ENCODE measurements at regions of chr1 and their contacts with region 1.

Region 1: GRCh38 chr1:109466452-109467300 is at the start of gene SYPL2:
- DNase-seq: peak in 1 of 2 donors; percentile 82
- H3K4me3 ChIP-seq: peak within 1 kb of the TSS; percentile 57 to 91
- H3K27ac ChIP-seq: peak within 1 kb of the TSS; percentile 74 to 92
- H3K4me1 ChIP-seq: no peaks in the 10 kb centered on the region
- H3K27me3 ChIP-seq: no peaks in the 10 kb centered on the region
- CTCF ChIP-seq: peak in 1 of 3 experiments; percentile 9
- total RNA-seq, gene SYPL2: 8.1 TPM

Region 2: GRCh38 chr1:109229531-109230127 is 237.0 kb before region 1 on chr1:
- intact Hi-C with region 1: no loop called
- DNase-seq: no peak
- H3K4me3 ChIP-seq: no peak overlapping the region
- H3K27ac ChIP-seq: no peak overlapping the region
- H3K4me1 ChIP-seq: no peaks in the 10 kb centered on the region
- H3K27me3 ChIP-seq: no peaks in the 10 kb centered on the region
- CTCF ChIP-seq: no peak

Region 3: GRCh38 chr1:109446085-109446695 is 20.5 kb before region 1 on chr1:
- intact Hi-C with region 1: no loop called
- DNase-seq: no peak
- H3K4me3 ChIP-seq: no peak overlapping the region
- H3K27ac ChIP-seq: no peak overlapping the region
- H3K4me1 ChIP-seq: no peaks in the 10 kb centered on the region
- H3K27me3 ChIP-seq: no peaks in the 10 kb centered on the region
- CTCF ChIP-seq: no peak

Region 4: GRCh38 chr1:109483672-109484518 is 17.2 kb after region 1 on chr1 and contains the start of gene ATXN7L2:
- intact Hi-C with region 1: loop called (anchors 1 kb)
- DNase-seq: peak; percentile 72 to 95
- H3K4me3 ChIP-seq: peak within 1 kb of the TSS; percentile 79
- H3K27ac ChIP-seq: peak within 1 kb of the TSS; percentile 91 to 93
- H3K4me1 ChIP-seq: peaks cover 6 to 12% of the 10 kb centered on the region in 2 donors
- H3K27me3 ChIP-seq: no peaks in the 10 kb centered on the region
- CTCF ChIP-seq: no peak
- total RNA-seq, gene ATXN7L2: 5.9 TPM